ENCODE measurements at regions of chr2 and their contacts with region 1.

Region 1: DNA sequence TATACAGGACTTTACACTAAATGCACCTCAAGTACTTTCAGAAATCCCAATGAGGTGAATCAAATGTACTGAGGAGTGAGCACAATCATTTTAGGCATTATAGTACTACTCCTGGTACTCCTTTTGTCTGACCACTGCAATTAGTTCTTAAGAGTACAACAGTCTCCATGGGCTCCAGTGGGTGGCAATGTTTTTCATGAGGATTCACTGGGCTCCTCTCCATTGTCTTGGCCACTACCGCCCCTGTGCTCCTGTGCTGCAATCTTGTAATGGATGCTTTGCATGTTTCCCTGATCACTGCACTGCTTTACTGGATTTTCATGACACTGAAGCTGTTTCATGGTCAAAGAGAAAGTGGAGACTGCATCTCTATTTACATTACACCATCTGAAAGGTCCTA is 268.5 kb upstream of the ZSWIM2 start:
- DNase-seq: no peak
- ATAC-seq: no peak
- H3K4me3 ChIP-seq: no peak overlapping the region
- H3K27ac ChIP-seq: no peak overlapping the region
- H3K4me1 ChIP-seq: no peaks in the 10 kb centered on the region
- H3K27me3 ChIP-seq: no peaks in the 10 kb centered on the region
- CTCF ChIP-seq: no peak
- POLR2A ChIP-seq: no peak

Region 2: GRCh38 chr2:187349326-187349944 is 232.0 kb after region 1 on chr2:
- in situ Hi-C with region 1: no loop called
- intact Hi-C with region 1: no loop called
- DNase-seq: no peak
- ATAC-seq: peak; percentile 73 to 84
- H3K4me3 ChIP-seq: no peak overlapping the region
- H3K27ac ChIP-seq: no peak overlapping the region
- H3K4me1 ChIP-seq: no peaks in the 10 kb centered on the region
- H3K27me3 ChIP-seq: no peaks in the 10 kb centered on the region
- CTCF ChIP-seq: no peak
- POLR2A ChIP-seq: no peak

Region 3: GRCh38 chr2:187547353-187547979 is 430.0 kb after region 1 on chr2:
- in situ Hi-C with region 1: no loop called
- intact Hi-C with region 1: no loop called
- DNase-seq: peak; percentile 74 to 81
- ATAC-seq: peak; percentile 94 to 99
- H3K4me3 ChIP-seq: no peak overlapping the region
- H3K27ac ChIP-seq: peak overlapping the region; percentile 71 to 85 (median 78)
- H3K4me1 ChIP-seq: peaks cover 8 to 32% of the 10 kb centered on the region in 2 donors
- H3K27me3 ChIP-seq: no peaks in the 10 kb centered on the region
- CTCF ChIP-seq: no peak
- POLR2A ChIP-seq: peak; percentile 26 to 52

Region 4: GRCh38 chr2:187906021-187906420 is 788.5 kb after region 1 on chr2:
- in situ Hi-C with region 1: no loop called
- intact Hi-C with region 1: loop called (anchors 5 kb)
- DNase-seq: no peak
- ATAC-seq: no peak
- H3K4me3 ChIP-seq: no peak overlapping the region
- H3K27ac ChIP-seq: no peak overlapping the region
- H3K4me1 ChIP-seq: peaks cover 0 to 4% of the 10 kb centered on the region in 2 donors
- H3K27me3 ChIP-seq: no peaks in the 10 kb centered on the region
- CTCF ChIP-seq: no peak
- POLR2A ChIP-seq: no peak

Measured in gastrocnemius medialis (tissue), 4 donors.